ENCODE measurements at regions of chr3 and their contacts with region 1.

Region 1: DNA sequence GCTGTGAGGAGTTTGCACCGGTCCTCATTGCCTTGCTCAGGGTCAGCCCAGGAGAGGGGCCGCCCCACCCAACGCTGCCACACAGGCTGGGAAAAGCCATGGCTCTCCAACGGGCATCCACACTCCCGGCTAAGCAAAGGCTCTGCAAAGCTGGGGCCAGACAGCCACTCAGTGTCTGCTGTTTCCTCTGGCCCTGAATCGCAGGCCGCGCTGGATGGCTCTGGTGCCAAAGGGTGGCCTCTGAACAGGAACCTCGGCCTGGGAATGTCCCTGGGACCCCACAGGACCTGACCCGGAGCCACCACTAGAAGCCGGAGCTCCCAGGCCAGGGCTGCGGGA is 42.9 kb downstream of the RPN1 start:
- DNase-seq: no peak
- ATAC-seq: no peak
- H3K4me3 ChIP-seq: peak overlapping the region; percentile 64
- H3K4me3 Mint-ChIP-seq: peak overlapping the region in 4 of 10 donors; percentile 9 to 54 (median 43)
- H3K27ac ChIP-seq: no peak overlapping the region
- H3K27ac Mint-ChIP-seq: no peak overlapping the region
- H3K4me1 ChIP-seq: peaks cover 0 to 3% of the 10 kb centered on the region in 2 donors
- H3K4me1 Mint-ChIP-seq: peaks cover 0 to 5% (median 0%) of the 10 kb centered on the region in 7 donors
- H3K27me3 ChIP-seq: no peaks in the 10 kb centered on the region
- H3K27me3 Mint-ChIP-seq: peaks cover 0 to 17% (median 5%) of the 10 kb centered on the region in 5 donors

Region 2: DNA sequence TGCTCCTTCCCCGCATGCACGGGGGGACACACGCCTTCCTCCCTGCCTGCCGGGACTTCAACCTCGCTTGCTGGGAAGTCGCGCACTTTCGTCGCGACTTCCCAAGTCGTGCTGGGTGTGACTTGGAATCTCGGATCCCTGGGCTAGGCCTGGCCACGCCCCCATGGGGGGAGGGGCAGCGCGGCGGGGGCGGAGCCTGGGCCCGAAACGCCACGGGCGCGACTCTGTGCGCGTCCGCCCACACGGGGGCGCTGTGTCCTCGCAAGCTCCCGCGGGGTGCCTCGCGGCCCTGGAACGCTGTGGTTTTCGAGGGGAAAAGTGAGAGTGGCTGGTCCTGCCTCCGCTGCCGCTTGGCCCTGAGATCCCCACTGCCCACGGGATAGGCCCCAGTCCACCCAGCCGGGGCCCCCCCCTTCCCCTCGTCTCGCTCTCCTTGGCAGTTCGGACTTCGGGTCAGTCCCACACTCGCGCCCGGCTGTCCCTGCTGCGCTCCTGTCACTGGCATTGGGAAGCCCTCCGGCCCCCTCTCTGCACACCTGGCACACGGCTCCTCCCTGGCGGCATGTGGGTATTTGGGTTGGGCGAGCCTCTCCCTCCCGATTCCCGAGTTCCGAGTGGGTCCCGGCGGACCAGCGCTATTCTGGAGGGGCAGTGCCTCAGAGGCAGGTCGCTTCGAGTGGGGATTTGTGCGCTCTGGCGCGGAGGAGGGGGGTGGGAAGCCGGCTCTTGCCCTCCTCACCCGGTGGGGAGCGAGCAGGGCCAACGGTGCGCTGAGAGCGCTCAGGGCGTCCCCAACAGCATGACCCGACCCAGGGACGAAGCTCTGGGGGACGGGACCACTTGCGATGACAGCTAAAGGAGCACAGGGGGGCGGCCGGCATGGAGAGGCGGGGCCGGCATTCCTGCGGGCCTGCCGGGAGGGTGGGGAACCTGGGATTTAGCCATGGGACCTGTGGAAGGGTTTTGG is 531.9 kb before region 1 on chr3:
- CTCF ChIA-PET with region 1: no interaction called
- POLR2A ChIA-PET with region 1: no interaction called
- intact Hi-C with region 1: loop called in 1 of 2 experiments (anchors 1 kb)
- DNase-seq: peak; percentile 73 to 93 (median 84)
- ATAC-seq: peak; percentile 95
- H3K4me3 ChIP-seq: peak overlapping the region; percentile 53
- H3K4me3 Mint-ChIP-seq: peak overlapping the region; percentile 55 to 82 (median 73)
- H3K27ac ChIP-seq: peak overlapping the region; percentile 42
- H3K27ac Mint-ChIP-seq: peak overlapping the region in 6 of 9 donors; percentile 51 to 84 (median 62)
- H3K4me1 ChIP-seq: peaks cover 0 to 9% of the 10 kb centered on the region in 2 donors
- H3K4me1 Mint-ChIP-seq: peaks cover 0 to 12% (median 7%) of the 10 kb centered on the region in 7 donors
- H3K27me3 ChIP-seq: no peaks in the 10 kb centered on the region
- H3K27me3 Mint-ChIP-seq: peaks cover 0 to 2% (median 0%) of the 10 kb centered on the region in 5 donors

Region 3: GRCh38 chr3:128226795-128227395 is 380.8 kb before region 1 on chr3:
- CTCF ChIA-PET with region 1: no interaction called
- POLR2A ChIA-PET with region 1: no interaction called
- intact Hi-C with region 1: loop called in 1 of 2 experiments (anchors 2 kb)
- DNase-seq: peak in 6 of 9 donors; percentile 8 to 38 (median 20)
- ATAC-seq: peak; percentile 53
- H3K4me3 ChIP-seq: no peak overlapping the region
- H3K4me3 Mint-ChIP-seq: no peak overlapping the region
- H3K27ac ChIP-seq: no peak overlapping the region
- H3K27ac Mint-ChIP-seq: peak overlapping the region in 7 of 9 donors; percentile 32 to 62 (median 45)
- H3K4me1 ChIP-seq: no peaks in the 10 kb centered on the region
- H3K4me1 Mint-ChIP-seq: peaks cover 0 to 45% (median 26%) of the 10 kb centered on the region in 7 donors
- H3K27me3 ChIP-seq: no peaks in the 10 kb centered on the region
- H3K27me3 Mint-ChIP-seq: no peaks in the 10 kb centered on the region

Region 4: DNA sequence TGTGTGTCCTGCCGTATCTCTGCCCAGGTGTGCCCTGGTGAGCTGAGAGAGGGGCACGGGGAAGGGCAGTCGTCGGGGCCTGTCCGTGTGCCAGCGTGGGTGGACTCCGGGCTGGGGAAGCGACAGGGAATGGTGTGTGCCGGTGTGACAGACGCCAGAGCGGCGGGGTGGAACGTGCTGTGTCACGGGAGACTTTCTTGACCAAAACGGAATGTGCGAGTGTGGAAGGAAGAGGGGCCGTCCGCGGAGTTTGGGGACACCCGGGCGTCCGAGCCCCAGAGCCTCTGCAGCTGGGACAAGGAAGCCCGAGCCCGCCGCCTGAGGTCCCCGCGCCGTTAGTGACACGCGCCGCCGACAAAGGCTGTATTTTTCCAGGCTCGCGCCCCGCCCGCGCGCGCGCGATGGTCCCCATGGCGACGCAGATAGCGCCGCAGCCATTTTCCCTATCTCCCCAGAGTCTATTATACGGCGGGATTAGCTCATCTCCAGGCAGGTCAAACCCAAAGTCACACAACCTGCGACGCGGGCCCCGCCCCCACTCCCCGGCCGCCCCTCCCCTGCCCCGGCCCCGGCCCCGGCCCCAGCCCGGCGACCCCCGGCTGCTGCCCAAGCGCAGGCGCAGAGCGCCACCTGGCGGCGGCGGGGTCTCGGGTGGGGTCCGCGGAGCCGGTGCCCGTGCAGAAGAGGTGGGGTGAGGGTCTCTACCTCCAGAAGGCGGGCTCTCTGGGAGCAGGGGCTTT is 110.1 kb before region 1 on chr3:
- CTCF ChIA-PET with region 1: interaction called, 3 read pairs
- POLR2A ChIA-PET with region 1: no interaction called
- intact Hi-C with region 1: loop called (anchors 1 to 5 kb)
- DNase-seq: peak; percentile 55 to 86 (median 72)
- ATAC-seq: peak; percentile 75
- H3K4me3 ChIP-seq: peak overlapping the region; percentile 5
- H3K4me3 Mint-ChIP-seq: peak overlapping the region; percentile 69 to 85 (median 77)
- H3K27ac ChIP-seq: no peak overlapping the region
- H3K27ac Mint-ChIP-seq: peak overlapping the region in 2 of 9 donors; percentile 41 to 62
- H3K4me1 ChIP-seq: peaks cover 0 to 4% of the 10 kb centered on the region in 2 donors
- H3K4me1 Mint-ChIP-seq: peaks cover 4 to 14% (median 9%) of the 10 kb centered on the region in 7 donors
- H3K27me3 ChIP-seq: peaks cover 0 to 5% of the 10 kb centered on the region in 2 donors
- H3K27me3 Mint-ChIP-seq: peaks cover 54 to 69% (median 59%) of the 10 kb centered on the region in 5 donors

Region 5: GRCh38 chr3:128667641-128668040 is 60.0 kb after region 1 on chr3:
- CTCF ChIA-PET with region 1: no interaction called
- POLR2A ChIA-PET with region 1: interaction called, 11 read pairs
- intact Hi-C with region 1: no loop called
- DNase-seq: no peak
- ATAC-seq: no peak
- H3K4me3 ChIP-seq: no peak overlapping the region
- H3K4me3 Mint-ChIP-seq: no peak overlapping the region
- H3K27ac ChIP-seq: no peak overlapping the region
- H3K27ac Mint-ChIP-seq: no peak overlapping the region
- H3K4me1 ChIP-seq: no peaks in the 10 kb centered on the region
- H3K4me1 Mint-ChIP-seq: peaks cover 0 to 4% (median 0%) of the 10 kb centered on the region in 7 donors
- H3K27me3 ChIP-seq: no peaks in the 10 kb centered on the region
- H3K27me3 Mint-ChIP-seq: peaks cover 0 to 43% (median 0%) of the 10 kb centered on the region in 5 donors